ENCODE measurements at regions of chr1 and their contacts with region 1.

Region 1: GRCh38 chr1:154558575-154559465 is at the start of gene UBE2Q1:
- DNase-seq: peak; percentile 100
- ATAC-seq: peak; percentile 95
- H3K4me3 Mint-ChIP-seq: peak within 1 kb of the TSS; percentile 90
- H3K27ac Mint-ChIP-seq: peak within 1 kb of the TSS; percentile 93
- H3K4me1 Mint-ChIP-seq: peaks cover 37% of the 10 kb centered on the region
- H3K27me3 Mint-ChIP-seq: no peaks in the 10 kb centered on the region
- total RNA-seq, gene UBE2Q1: 93.6 to 103 TPM

Region 2: DNA sequence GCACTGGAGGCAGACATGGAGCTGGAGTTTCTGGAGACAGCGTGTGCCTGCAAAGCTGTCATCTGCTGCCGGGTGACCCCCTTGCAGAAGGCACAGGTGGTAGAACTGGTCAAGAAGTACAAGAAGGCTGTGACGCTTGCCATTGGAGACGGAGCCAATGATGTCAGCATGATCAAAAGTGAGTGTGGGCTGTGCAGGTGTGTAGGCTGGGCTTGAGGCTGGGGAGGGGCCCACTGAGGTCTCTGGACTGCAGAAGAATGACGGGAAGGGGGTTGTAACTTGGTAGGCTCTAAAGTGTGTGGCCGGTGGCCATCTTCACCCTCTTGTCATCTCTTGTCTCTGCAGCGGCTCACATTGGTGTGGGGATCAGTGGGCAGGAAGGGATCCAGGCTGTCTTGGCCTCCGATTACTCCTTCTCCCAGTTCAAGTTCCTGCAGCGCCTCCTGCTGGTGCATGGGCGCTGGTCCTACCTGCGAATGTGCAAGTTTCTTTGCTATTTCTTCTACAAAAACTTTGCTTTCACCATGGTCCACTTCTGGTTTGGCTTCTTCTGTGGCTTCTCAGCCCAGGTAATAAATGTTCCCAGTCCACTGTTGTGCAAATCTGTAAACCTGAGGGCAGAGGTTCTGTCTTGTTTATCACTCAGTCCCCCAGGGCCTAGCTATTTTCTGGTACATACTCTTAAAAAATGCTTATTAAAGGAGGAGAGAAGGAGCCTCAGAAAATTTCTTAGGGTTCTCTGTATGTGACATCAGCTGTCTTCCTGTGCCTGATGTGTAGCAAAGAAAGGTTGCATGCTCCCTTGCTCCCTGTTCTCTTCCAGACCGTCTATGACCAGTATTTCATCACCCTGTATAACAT is 213.6 kb before region 1 on chr1:
- CTCF ChIA-PET with region 1: no interaction called
- POLR2A ChIA-PET with region 1: no interaction called
- DNase-seq: peak; percentile 77
- ATAC-seq: no peak
- H3K4me3 Mint-ChIP-seq: no peak overlapping the region
- H3K27ac Mint-ChIP-seq: no peak overlapping the region
- H3K4me1 Mint-ChIP-seq: peaks cover 60% of the 10 kb centered on the region
- H3K27me3 Mint-ChIP-seq: no peaks in the 10 kb centered on the region

Region 3: GRCh38 chr1:154431586-154432373 is 127.0 kb before region 1 on chr1:
- CTCF ChIA-PET with region 1: no interaction called
- POLR2A ChIA-PET with region 1: no interaction called
- DNase-seq: no peak
- ATAC-seq: no peak
- H3K4me3 Mint-ChIP-seq: no peak overlapping the region
- H3K27ac Mint-ChIP-seq: no peak overlapping the region
- H3K4me1 Mint-ChIP-seq: peaks cover 18% of the 10 kb centered on the region
- H3K27me3 Mint-ChIP-seq: peaks cover 4% of the 10 kb centered on the region

Region 4: GRCh38 chr1:154479764-154480421 is 78.9 kb before region 1 on chr1:
- CTCF ChIA-PET with region 1: interaction called, 36 read pairs
- POLR2A ChIA-PET with region 1: no interaction called
- DNase-seq: peak; percentile 72
- ATAC-seq: peak; percentile 95
- H3K4me3 Mint-ChIP-seq: no peak overlapping the region
- H3K27ac Mint-ChIP-seq: no peak overlapping the region
- H3K4me1 Mint-ChIP-seq: peaks cover 6% of the 10 kb centered on the region
- H3K27me3 Mint-ChIP-seq: peaks cover 13% of the 10 kb centered on the region

Region 5: GRCh38 chr1:154607609-154608396 is 49.0 kb after region 1 on chr1 and contains the start of gene ADAR:
- CTCF ChIA-PET with region 1: interaction called, 24 read pairs
- POLR2A ChIA-PET with region 1: interaction called, 3 read pairs
- DNase-seq: peak; percentile 96
- ATAC-seq: peak; percentile 82
- H3K4me3 Mint-ChIP-seq: peak within 1 kb of the TSS; percentile 85
- H3K27ac Mint-ChIP-seq: peak within 1 kb of the TSS; percentile 97
- H3K4me1 Mint-ChIP-seq: peaks cover 66% of the 10 kb centered on the region
- H3K27me3 Mint-ChIP-seq: no peaks in the 10 kb centered on the region
- total RNA-seq, gene ADAR: 314 to 317 TPM

Region 6: GRCh38 chr1:154760469-154760933 is 201.7 kb after region 1 on chr1:
- CTCF ChIA-PET with region 1: interaction called, 20 read pairs
- POLR2A ChIA-PET with region 1: no interaction called
- DNase-seq: peak; percentile 87
- ATAC-seq: peak; percentile 93
- H3K4me3 Mint-ChIP-seq: peak overlapping the region; percentile 53
- H3K27ac Mint-ChIP-seq: no peak overlapping the region
- H3K4me1 Mint-ChIP-seq: peaks cover 45% of the 10 kb centered on the region
- H3K27me3 Mint-ChIP-seq: peaks cover 21% of the 10 kb centered on the region

Region 7: DNA sequence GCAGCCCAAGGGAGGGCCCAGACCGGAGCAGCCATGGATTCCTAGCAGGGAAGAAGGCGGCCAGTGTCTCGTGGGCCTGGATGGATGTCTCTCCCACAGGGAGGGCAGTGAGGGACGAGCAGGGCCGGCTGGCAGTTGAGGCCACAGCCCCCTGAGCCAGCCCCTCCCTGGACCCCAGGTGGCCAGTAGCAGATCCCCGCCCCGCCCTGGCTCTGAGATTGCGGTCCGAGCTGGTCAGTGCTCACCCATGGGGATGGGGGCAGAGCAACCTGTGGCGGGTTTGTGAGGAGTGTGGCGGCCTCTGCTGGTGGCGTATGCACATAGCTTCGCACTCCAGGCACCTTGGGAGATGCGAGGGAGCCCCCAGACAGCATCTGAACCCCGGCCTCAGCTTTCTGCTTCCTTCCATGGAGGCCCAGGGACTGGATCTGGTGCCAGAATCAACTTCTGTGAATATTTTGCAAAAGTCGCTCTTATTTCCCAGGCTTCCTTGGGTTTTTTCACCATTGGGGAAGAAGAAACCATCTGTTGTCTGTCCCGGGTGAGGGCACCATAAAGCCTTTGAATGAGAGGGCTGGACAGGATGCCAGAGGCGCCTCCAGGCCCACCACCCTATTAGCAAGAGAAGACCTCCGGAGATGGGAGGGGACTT is 319.7 kb after region 1 on chr1:
- CTCF ChIA-PET with region 1: interaction called, 24 read pairs
- POLR2A ChIA-PET with region 1: no interaction called
- DNase-seq: peak; percentile 78
- ATAC-seq: peak; percentile 92
- H3K4me3 Mint-ChIP-seq: no peak overlapping the region
- H3K27ac Mint-ChIP-seq: no peak overlapping the region
- H3K4me1 Mint-ChIP-seq: no peaks in the 10 kb centered on the region
- H3K27me3 Mint-ChIP-seq: peaks cover 2% of the 10 kb centered on the region

Region 8: GRCh38 chr1:155001675-155002463 is 443.0 kb after region 1 on chr1:
- CTCF ChIA-PET with region 1: interaction called, 16 read pairs
- POLR2A ChIA-PET with region 1: no interaction called
- DNase-seq: peak; percentile 100
- ATAC-seq: peak; percentile 76
- H3K4me3 Mint-ChIP-seq: peak overlapping the region; percentile 86
- H3K27ac Mint-ChIP-seq: peak overlapping the region; percentile 97
- H3K4me1 Mint-ChIP-seq: peaks cover 62% of the 10 kb centered on the region
- H3K27me3 Mint-ChIP-seq: no peaks in the 10 kb centered on the region

Measured in activated CD8-positive, alpha-beta T cell treated with anti-CD3 and anti-CD28 coated beads, Interleukin-2, amount 10 ng/mL, durations not matched to agents 7 days and 5 days (primary cell).